Right ventricle myocardium superior (tissue), 1 donor: ENCODE measurements at regions of chr2 and their contacts with region 1.

Region 1: GRCh38 chr2:177332041-177332991 is 60.3 kb upstream of the AGPS start:
- DNase-seq: peak; percentile 49
- ATAC-seq: peak; percentile 89

Region 2: GRCh38 chr2:177164584-177165052 is 167.7 kb before region 1 on chr2:
- intact Hi-C with region 1: loop called (anchors 2 kb)
- DNase-seq: peak; percentile 90
- ATAC-seq: peak; percentile 96

Region 3: GRCh38 chr2:177263451-177264208 is 68.7 kb before region 1 on chr2:
- intact Hi-C with region 1: loop called (anchors 5 kb)
- DNase-seq: peak; percentile 99
- ATAC-seq: peak; percentile 79

Region 4: GRCh38 chr2:177419274-177419673 is 87.0 kb after region 1 on chr2:
- intact Hi-C with region 1: loop called (anchors 5 kb)
- DNase-seq: no peak
- ATAC-seq: no peak

Region 5: GRCh38 chr2:177604271-177605065 is 272.2 kb after region 1 on chr2:
- intact Hi-C with region 1: loop called (anchors 10 kb)
- DNase-seq: no peak
- ATAC-seq: peak; percentile 75

Region 6: DNA sequence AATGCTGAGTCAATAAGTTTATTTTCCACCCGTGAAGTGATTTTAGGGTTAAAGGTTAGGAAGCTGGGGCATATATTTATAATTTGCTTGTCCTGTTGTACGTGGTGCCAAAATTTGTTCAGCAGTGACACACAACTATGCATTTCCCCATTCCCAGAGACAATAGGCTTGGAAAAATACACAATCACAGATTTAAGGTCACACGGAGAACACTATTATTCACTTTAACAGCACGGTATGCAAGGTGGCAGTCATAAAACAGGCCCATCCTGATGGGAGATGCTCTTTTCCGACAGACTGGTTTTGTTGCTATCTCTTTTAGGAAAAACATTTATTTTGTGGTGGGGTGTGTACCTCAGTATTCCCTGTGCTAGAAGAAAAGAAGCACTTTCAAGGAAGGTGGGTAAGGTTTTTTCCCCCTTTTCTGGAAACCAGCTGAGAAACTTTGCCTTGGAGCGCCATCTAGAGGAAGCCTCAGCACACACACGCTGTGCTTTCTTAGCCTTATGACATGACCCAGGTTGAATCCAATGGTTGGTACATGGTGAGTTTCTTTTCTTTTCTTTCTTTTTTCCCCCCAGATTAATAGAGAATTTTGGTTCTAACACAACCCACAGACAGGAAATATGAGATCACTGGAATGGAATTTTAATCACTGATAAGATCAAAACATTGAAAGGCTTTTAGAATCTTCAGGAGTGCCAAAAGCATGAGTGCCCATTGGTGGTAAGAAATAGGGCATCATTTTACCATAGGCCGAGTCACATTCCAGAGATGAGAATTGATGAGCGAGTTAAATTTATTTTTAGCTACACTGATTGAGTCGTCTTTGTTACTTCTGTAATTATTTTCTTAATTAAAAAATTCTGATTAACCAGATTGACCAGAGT is 392.3 kb after region 1 on chr2:
- intact Hi-C with region 1: loop called (anchors 10 kb)
- DNase-seq: peak; percentile 47
- ATAC-seq: peak; percentile 77

Region 7: DNA sequence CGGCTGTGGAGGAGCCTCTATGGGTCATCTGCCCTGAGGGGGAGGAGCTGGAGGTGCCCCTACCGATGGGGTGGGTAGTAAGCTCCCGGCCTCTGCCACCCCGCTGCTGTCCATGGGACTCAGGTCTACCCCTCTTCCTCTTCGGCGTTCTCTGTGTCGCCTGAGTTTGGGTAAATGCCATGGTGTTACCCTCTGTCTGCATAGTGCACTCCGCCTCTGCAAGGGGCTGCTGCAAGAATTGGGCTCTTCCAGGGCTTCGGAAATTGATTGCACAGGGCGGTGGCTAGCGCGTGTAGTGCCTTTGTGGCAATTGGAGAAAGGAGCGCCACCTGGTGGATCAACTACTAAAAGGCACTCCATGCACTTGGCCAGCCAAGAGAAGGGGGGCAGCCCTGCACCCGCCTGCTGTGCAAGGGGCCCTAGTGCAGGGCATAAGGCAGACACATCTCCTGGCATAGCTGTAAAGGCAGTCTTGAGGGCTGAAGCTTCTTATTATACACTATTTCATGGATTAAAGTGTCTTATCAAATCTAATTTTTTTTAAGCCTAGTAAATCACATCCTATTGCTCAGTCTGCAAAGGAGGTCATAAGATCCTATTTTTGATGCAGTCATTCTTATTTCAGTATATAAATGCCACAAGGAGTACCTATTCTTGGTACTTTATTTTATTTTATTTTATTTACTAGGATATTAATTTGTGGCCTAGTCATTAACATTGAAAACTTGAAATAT is 431.4 kb after region 1 on chr2:
- intact Hi-C with region 1: loop called (anchors 10 kb)
- DNase-seq: peak; percentile 73
- ATAC-seq: peak; percentile 86